ENCODE measurements at regions of chr20 and their contacts with region 1.

Region 1: DNA sequence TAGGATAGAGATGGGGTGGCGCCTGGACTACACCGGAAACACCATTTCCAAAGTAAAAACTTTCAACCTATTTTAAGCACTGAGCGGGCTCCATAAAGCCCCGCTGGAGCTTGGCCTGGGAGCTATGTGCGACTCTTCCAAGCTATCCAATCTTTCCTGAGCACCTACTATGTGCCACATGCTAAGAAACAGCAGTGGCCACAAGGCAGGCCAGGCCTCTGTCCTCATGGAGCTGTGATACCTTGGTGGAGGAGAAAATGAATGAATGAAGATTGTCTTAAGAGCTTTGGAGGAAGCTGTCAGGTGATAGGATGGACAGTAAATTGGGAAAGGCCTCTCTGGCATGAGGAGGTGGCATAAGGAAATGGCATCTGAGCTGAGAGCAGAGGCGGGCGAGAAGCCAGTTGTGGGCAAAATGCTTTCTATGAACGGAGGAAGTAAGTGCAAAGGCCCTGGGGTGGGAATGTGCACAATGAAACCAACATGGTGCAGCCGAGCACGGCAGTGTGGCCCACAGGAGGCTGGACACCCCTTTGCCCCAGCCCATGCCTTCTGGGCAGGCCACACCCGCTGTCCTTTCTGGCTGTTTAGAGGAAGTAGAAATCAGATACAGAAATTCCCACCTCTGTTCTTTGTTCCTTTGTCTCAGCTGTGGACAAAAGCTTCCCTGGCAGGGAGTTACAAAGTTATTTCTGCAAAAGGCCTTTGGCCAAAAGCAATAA is 12.1 kb downstream of the SULF2 start:
- DNase-seq: peak; percentile 85

Region 2: DNA sequence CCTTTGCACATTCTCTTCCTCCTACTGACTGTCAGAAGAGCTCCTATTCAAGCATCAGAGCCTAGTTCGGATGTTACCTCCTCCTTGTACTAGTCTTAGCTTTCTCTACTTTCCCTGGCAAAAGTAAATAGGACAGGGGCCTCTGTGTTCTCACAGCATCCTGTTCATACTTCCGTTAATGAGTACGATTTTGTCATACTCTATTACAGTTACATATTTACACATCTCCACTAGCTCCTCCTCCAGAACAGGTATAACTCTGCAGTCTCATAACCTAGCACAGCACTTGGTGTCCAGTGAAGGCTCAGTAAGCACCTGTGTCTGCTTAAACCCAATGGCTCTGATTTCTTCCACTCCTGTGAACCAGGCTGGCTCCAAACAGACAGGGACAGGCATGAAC is 1373.8 kb before region 1 on chr20:
- intact Hi-C with region 1: loop called in 1 of 2 experiments (anchors 10 kb)
- DNase-seq: no peak

Region 3: GRCh38 chr20:47720636-47721427 is 52.3 kb before region 1 on chr20:
- intact Hi-C with region 1: no loop called
- DNase-seq: no peak